Naive thymus-derived CD4-positive, alpha-beta T cell (primary cell): ENCODE measurements at regions of chr3 and their contacts with region 1.

Region 1: DNA sequence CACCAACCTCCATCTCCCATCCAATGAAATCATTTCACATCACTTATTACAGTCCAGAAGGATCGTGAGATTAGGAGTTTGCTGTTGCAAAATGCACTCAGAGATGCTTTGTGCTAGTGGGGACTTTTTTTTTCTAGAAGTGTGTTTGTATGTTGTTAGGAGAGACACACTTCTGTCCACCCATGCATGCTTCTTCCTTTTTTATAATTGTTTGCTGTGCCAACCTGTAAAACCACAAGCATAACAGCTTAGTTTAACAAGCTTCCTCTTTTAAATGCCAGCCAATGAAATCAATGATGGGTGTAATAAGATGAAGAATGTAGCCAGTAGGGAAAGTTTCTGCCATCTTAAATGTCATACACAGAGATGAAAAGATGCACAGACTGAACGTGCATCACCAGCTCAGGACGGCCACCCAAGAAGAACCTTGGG is 305.6 kb upstream of the STT3B start:
- DNase-seq: peak in 7 of 9 donors; percentile 38 to 82 (median 60)
- ATAC-seq: peak; percentile 89
- H3K4me3 ChIP-seq: peak overlapping the region; percentile 47
- H3K4me3 Mint-ChIP-seq: peak overlapping the region; percentile 38 to 80 (median 66)
- H3K27ac ChIP-seq: peak overlapping the region; percentile 66
- H3K27ac Mint-ChIP-seq: peak overlapping the region; percentile 82 to 96 (median 92)
- H3K4me1 ChIP-seq: peaks cover 75 to 84% of the 10 kb centered on the region in 2 donors
- H3K4me1 Mint-ChIP-seq: peaks cover 73 to 97% (median 93%) of the 10 kb centered on the region in 7 donors
- H3K27me3 ChIP-seq: no peaks in the 10 kb centered on the region
- H3K27me3 Mint-ChIP-seq: no peaks in the 10 kb centered on the region

Region 2: DNA sequence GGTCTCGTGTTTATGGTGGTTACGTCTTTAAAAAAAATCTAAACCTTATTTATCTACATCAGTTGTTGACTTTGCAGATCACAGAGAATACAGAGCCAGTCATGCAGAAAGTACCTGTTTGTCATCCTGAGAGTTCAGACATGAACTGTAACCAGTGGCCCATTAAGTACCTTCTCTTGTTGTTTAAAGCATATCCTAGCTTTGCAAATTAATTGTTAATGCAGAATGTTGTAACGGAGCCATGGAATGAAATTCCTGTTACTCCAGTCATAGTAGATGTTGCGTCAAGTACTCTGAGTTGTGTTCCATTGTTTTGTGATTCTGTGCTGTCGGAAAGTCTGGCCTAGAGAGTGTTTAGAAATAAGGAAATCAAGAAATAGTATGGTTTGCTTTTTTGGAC is 1741.1 kb before region 1 on chr3:
- CTCF ChIA-PET with region 1: no interaction called
- POLR2A ChIA-PET with region 1: no interaction called
- intact Hi-C with region 1: no loop called
- DNase-seq: no peak
- ATAC-seq: no peak
- H3K4me3 ChIP-seq: no peak overlapping the region
- H3K4me3 Mint-ChIP-seq: no peak overlapping the region
- H3K27ac ChIP-seq: no peak overlapping the region
- H3K27ac Mint-ChIP-seq: no peak overlapping the region
- H3K4me1 ChIP-seq: no peaks in the 10 kb centered on the region
- H3K4me1 Mint-ChIP-seq: no peaks in the 10 kb centered on the region
- H3K27me3 ChIP-seq: no peaks in the 10 kb centered on the region
- H3K27me3 Mint-ChIP-seq: peaks cover 0 to 4% (median 0%) of the 10 kb centered on the region in 5 donors

Region 3: DNA sequence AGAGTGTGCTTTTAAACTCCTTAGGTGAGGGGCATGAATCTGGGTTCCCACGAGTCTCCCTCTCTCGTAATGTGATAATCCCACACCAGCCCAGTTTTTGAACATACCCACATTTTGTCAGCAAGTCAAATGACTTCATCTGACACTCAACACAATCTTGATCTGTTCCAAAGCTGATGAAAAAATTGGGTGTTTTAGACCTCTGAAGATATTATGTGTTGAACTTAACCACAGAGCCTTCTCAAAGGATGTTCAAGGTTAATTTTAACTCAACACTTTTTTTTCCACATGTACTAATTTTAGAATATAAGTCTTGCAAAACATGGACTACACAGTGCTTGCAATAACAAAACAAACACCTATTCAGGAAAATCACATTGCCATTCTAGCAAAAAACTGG is 497.6 kb before region 1 on chr3:
- CTCF ChIA-PET with region 1: no interaction called
- POLR2A ChIA-PET with region 1: no interaction called
- intact Hi-C with region 1: no loop called
- DNase-seq: peak in 6 of 9 donors; percentile 4 to 57 (median 37)
- ATAC-seq: peak; percentile 60
- H3K4me3 ChIP-seq: no peak overlapping the region
- H3K4me3 Mint-ChIP-seq: peak overlapping the region in 8 of 10 donors; percentile 18 to 75 (median 48)
- H3K27ac ChIP-seq: no peak overlapping the region
- H3K27ac Mint-ChIP-seq: peak overlapping the region in 6 of 9 donors; percentile 0 to 76 (median 35)
- H3K4me1 ChIP-seq: peaks cover 3 to 15% of the 10 kb centered on the region in 2 donors
- H3K4me1 Mint-ChIP-seq: peaks cover 14 to 54% (median 51%) of the 10 kb centered on the region in 7 donors
- H3K27me3 ChIP-seq: no peaks in the 10 kb centered on the region
- H3K27me3 Mint-ChIP-seq: peaks cover 0 to 2% (median 0%) of the 10 kb centered on the region in 5 donors

Region 4: DNA sequence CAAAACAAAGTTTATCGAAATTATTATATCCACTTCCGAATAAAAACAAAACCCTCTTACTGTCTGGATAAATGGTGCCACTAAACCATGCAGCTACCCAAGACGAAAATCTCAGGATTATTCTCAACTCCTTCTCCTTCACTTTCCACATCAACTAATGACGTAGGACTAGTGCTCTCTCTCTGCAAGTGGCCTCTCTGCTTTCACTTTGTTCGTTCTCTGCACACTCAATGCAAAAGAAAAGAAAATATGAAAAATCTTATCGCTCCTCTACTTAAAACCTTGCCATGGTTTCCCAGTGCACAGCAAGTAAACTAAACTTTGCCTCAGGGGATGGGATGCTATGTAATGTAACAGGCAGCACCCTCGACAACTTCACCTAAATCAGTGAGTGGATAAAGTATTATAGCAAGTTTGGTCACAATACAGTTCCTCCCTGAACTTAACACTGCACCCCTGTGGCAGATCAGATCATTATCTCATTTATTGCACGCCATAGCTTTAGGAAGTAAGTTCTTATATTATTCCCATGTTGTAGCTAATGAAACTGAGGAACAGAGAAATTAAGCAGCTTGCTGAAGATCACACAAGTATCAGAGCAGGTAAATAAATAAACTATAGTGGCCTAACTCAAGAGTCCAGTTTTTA is 70.0 kb before region 1 on chr3:
- CTCF ChIA-PET with region 1: no interaction called
- POLR2A ChIA-PET with region 1: no interaction called
- intact Hi-C with region 1: loop called in 1 of 2 experiments (anchors 2 kb)
- DNase-seq: peak in 4 of 9 donors; percentile 0 to 19 (median 2)
- ATAC-seq: peak; percentile 37
- H3K4me3 ChIP-seq: peak overlapping the region; percentile 19
- H3K4me3 Mint-ChIP-seq: peak overlapping the region in 9 of 10 donors; percentile 27 to 78 (median 71)
- H3K27ac ChIP-seq: no peak overlapping the region
- H3K27ac Mint-ChIP-seq: peak overlapping the region in 8 of 9 donors; percentile 3 to 69 (median 50)
- H3K4me1 ChIP-seq: no peaks in the 10 kb centered on the region
- H3K4me1 Mint-ChIP-seq: peaks cover 9 to 13% (median 10%) of the 10 kb centered on the region in 7 donors
- H3K27me3 ChIP-seq: no peaks in the 10 kb centered on the region
- H3K27me3 Mint-ChIP-seq: no peaks in the 10 kb centered on the region

Region 5: DNA sequence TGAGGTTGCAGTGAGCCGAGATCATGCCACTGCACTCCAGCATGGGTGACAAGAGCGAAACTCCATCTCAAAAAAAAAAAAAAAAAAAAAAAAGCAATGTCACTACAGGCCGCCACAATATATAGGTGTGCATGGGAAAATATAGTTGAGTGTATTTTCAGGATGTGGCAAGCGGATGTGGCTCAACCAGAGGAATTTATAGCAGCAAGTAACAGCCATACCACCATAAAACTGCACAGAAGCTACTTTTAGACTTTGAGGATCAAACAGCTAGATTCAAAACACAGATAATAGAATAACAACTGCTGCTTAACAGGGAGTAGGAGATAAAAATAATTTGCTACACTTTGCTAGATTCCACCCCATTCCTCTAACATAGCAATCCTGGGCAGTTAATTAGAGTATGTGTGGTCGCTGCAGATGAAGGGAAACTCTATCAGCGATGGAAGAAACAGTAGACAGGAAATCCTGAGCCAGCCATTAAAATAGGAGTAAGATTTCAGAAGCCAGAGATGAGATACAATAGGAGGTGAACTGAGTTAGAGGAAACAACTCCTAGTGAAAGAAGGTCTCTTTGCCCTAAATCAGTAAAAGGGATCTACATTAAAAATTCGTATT is 13.2 kb before region 1 on chr3:
- CTCF ChIA-PET with region 1: interaction called, 6 read pairs
- POLR2A ChIA-PET with region 1: interaction called, 42 read pairs
- intact Hi-C with region 1: loop called (anchors 1 kb)
- DNase-seq: peak in 7 of 9 donors; percentile 57 to 86 (median 76)
- ATAC-seq: peak; percentile 86
- H3K4me3 ChIP-seq: no peak overlapping the region
- H3K4me3 Mint-ChIP-seq: peak overlapping the region; percentile 34 to 82 (median 69)
- H3K27ac ChIP-seq: no peak overlapping the region
- H3K27ac Mint-ChIP-seq: peak overlapping the region; percentile 26 to 89 (median 64)
- H3K4me1 ChIP-seq: peaks cover 48 to 49% of the 10 kb centered on the region in 2 donors
- H3K4me1 Mint-ChIP-seq: peaks cover 53 to 99% (median 98%) of the 10 kb centered on the region in 7 donors
- H3K27me3 ChIP-seq: no peaks in the 10 kb centered on the region
- H3K27me3 Mint-ChIP-seq: peaks cover 0 to 2% (median 0%) of the 10 kb centered on the region in 5 donors

Region 6: DNA sequence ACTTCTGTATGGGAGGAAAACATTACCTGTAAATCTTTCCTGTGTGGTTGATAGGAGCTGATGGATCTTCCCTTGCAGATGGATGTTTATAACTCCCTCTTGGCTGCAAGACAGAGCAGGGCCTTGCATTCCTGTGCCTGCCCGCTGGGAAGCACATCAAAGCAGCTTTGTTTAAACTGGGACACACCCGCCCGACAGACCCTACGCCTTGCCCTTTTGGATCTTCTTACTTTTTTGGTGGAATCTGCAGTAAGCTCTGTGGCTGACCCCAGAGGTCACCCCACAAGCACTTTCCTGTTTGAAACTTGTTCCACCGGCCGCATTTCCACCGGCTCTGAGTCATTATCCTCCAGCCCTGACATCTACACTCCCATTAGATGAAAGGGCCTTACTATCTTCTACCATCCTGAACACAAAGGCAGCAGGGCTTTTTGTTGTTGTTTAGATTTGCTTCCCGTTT is 61.5 kb after region 1 on chr3:
- CTCF ChIA-PET with region 1: no interaction called
- POLR2A ChIA-PET with region 1: no interaction called
- intact Hi-C with region 1: loop called in 1 of 2 experiments (anchors 5 kb)
- DNase-seq: peak in 1 of 9 donors; percentile 55
- ATAC-seq: no peak
- H3K4me3 ChIP-seq: no peak overlapping the region
- H3K4me3 Mint-ChIP-seq: peak overlapping the region in 1 of 10 donors; percentile 53
- H3K27ac ChIP-seq: no peak overlapping the region
- H3K27ac Mint-ChIP-seq: peak overlapping the region in 1 of 9 donors; percentile 75
- H3K4me1 ChIP-seq: no peaks in the 10 kb centered on the region
- H3K4me1 Mint-ChIP-seq: peaks cover 6 to 39% (median 23%) of the 10 kb centered on the region in 7 donors
- H3K27me3 ChIP-seq: no peaks in the 10 kb centered on the region
- H3K27me3 Mint-ChIP-seq: no peaks in the 10 kb centered on the region

Region 7: DNA sequence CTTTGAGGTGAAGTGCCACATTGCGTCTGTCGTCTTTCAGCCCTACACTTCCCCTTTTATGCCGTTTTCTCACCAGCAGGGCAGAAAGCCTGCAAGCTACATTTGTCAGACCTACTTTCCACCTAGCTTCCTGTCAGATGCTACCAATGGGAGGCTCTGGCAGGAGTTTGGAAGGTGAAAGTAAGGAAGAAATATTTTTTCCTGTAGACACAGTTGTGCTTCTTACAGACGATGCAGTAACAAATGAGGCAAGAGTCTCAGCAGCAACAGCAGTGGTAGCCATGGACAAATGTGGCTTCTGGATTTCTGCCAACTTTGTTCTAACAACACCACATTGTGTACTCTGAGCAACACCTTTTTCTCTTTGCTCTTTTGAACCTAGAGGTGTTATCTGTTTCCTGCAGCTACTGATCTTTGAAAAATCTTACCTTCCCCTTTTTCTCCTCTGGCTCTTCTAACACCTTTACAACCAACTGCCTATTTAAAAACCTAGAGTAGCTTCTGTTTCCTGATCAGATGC is 235.0 kb after region 1 on chr3:
- CTCF ChIA-PET with region 1: no interaction called
- POLR2A ChIA-PET with region 1: interaction called, 5 read pairs
- intact Hi-C with region 1: loop called in 1 of 2 experiments (anchors 1 kb)
- DNase-seq: peak in 7 of 9 donors; percentile 78 to 93 (median 86)
- ATAC-seq: peak; percentile 93
- H3K4me3 ChIP-seq: peak overlapping the region; percentile 49
- H3K4me3 Mint-ChIP-seq: peak overlapping the region; percentile 28 to 95 (median 78)
- H3K27ac ChIP-seq: peak overlapping the region; percentile 68
- H3K27ac Mint-ChIP-seq: peak overlapping the region; percentile 70 to 100 (median 96)
- H3K4me1 ChIP-seq: peaks cover 49 to 59% of the 10 kb centered on the region in 2 donors
- H3K4me1 Mint-ChIP-seq: peaks cover 14 to 79% (median 68%) of the 10 kb centered on the region in 7 donors
- H3K27me3 ChIP-seq: no peaks in the 10 kb centered on the region
- H3K27me3 Mint-ChIP-seq: no peaks in the 10 kb centered on the region

Region 8: DNA sequence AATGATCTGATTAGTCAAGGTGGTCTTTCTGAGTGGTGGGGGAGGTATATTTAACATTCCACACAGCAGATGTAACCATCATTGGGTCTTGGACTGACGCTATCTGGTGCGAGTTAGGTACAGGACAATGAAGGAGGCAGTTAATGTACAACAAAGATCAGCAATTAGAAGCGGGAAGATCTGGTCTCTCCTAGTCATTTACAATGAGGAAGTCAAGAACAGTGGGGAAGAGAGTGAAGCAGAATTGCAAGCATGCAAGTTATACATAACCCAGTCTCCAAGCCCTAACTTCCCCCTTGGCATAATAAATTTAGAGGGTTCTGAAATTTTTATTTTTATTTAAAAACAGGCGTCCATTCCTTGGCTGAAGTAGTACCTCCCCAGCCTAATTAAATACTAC is 893.3 kb after region 1 on chr3:
- CTCF ChIA-PET with region 1: no interaction called
- POLR2A ChIA-PET with region 1: no interaction called
- intact Hi-C with region 1: loop called in 1 of 2 experiments (anchors 10 kb)
- DNase-seq: no peak
- ATAC-seq: peak; percentile 67
- H3K4me3 ChIP-seq: no peak overlapping the region
- H3K4me3 Mint-ChIP-seq: no peak overlapping the region
- H3K27ac ChIP-seq: no peak overlapping the region
- H3K27ac Mint-ChIP-seq: no peak overlapping the region
- H3K4me1 ChIP-seq: peaks cover 4 to 23% of the 10 kb centered on the region in 2 donors
- H3K4me1 Mint-ChIP-seq: peaks cover 21 to 62% (median 53%) of the 10 kb centered on the region in 7 donors
- H3K27me3 ChIP-seq: no peaks in the 10 kb centered on the region
- H3K27me3 Mint-ChIP-seq: no peaks in the 10 kb centered on the region

Region 9: GRCh38 chr3:33113772-33114621 is 1886.8 kb after region 1 on chr3 and contains the start of gene CRTAP:
- CTCF ChIA-PET with region 1: no interaction called
- POLR2A ChIA-PET with region 1: no interaction called
- intact Hi-C with region 1: loop called in 1 of 2 experiments (anchors 10 kb)
- DNase-seq: peak; percentile 69 to 86 (median 79)
- ATAC-seq: peak; percentile 92
- H3K4me3 ChIP-seq: peak within 1 kb of the TSS; percentile 82
- H3K4me3 Mint-ChIP-seq: peak within 1 kb of the TSS; percentile 88 to 95 (median 92)
- H3K27ac ChIP-seq: peak within 1 kb of the TSS; percentile 69
- H3K27ac Mint-ChIP-seq: peak within 1 kb of the TSS; percentile 75 to 91 (median 85)
- H3K4me1 ChIP-seq: peaks cover 17 to 23% of the 10 kb centered on the region in 2 donors
- H3K4me1 Mint-ChIP-seq: peaks cover 23 to 52% (median 37%) of the 10 kb centered on the region in 7 donors
- H3K27me3 ChIP-seq: no peaks in the 10 kb centered on the region
- H3K27me3 Mint-ChIP-seq: no peaks in the 10 kb centered on the region
- total RNA-seq, gene CRTAP: 27.1 to 86.1 (median 46.4) TPM